Upper lobe of right lung (tissue), 1 donor: ENCODE measurements at regions of chr12 and their contacts with region 1.

Region 1: DNA sequence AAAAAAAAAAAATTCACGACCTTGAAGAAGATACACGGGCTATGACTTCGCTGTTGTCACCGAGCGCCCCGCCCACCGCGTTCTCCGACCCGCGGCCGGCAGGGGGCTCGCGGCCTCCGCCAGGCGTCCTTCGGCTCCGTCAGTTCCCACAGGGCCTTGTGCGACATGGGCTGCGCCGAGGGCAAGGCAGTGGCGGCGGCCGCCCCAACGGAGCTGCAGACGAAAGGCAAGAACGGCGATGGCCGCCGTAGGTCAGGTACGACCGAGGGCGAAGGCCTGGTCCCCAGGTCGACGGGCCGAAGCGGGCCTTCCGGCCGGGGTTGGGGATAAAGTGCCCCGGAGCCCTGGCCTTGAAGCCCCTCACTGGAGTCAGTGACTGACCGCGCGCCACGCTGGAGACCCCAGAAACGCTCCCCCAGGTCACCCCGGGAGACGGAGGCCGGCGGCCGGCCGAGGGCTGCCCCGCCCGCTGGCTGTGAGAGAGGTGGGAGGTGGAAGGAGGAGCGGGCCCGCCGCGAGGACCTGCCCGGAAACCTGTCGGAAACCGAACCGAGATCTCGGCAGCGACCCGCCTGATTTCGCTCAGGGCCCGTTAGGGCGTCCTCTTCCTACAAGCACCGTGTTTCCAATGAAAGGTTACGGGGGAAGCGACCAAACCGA is at the start of gene TXNRD1:
- DNase-seq: peak; percentile 94
- ATAC-seq: peak; percentile 98
- H3K4me3 ChIP-seq: peak within 1 kb of the TSS; percentile 82
- H3K27ac ChIP-seq: peak within 1 kb of the TSS; percentile 89
- H3K4me1 ChIP-seq: peaks cover 30% of the 10 kb centered on the region
- H3K27me3 ChIP-seq: no peaks in the 10 kb centered on the region
- CTCF ChIP-seq: peak; percentile 91
- total RNA-seq, gene TXNRD1: 161 TPM

Region 2: GRCh38 chr12:104286538-104287482 is 71.0 kb after region 1 on chr12:
- intact Hi-C with region 1: loop called (anchors 5 kb)
- DNase-seq: peak; percentile 94
- ATAC-seq: peak; percentile 89
- H3K4me3 ChIP-seq: peak overlapping the region; percentile 92
- H3K27ac ChIP-seq: peak overlapping the region; percentile 97
- H3K4me1 ChIP-seq: peaks cover 28% of the 10 kb centered on the region
- H3K27me3 ChIP-seq: no peaks in the 10 kb centered on the region
- CTCF ChIP-seq: no peak

Region 3: GRCh38 chr12:104358347-104359003 is 142.7 kb after region 1 on chr12:
- intact Hi-C with region 1: loop called (anchors 5 kb)
- DNase-seq: peak; percentile 77
- ATAC-seq: peak; percentile 93
- H3K4me3 ChIP-seq: no peak overlapping the region
- H3K27ac ChIP-seq: no peak overlapping the region
- H3K4me1 ChIP-seq: no peaks in the 10 kb centered on the region
- H3K27me3 ChIP-seq: no peaks in the 10 kb centered on the region
- CTCF ChIP-seq: peak; percentile 89